Lower leg skin (tissue), 4 donors: ENCODE measurements at regions of chr1 and their contacts with region 1.

Region 1: DNA sequence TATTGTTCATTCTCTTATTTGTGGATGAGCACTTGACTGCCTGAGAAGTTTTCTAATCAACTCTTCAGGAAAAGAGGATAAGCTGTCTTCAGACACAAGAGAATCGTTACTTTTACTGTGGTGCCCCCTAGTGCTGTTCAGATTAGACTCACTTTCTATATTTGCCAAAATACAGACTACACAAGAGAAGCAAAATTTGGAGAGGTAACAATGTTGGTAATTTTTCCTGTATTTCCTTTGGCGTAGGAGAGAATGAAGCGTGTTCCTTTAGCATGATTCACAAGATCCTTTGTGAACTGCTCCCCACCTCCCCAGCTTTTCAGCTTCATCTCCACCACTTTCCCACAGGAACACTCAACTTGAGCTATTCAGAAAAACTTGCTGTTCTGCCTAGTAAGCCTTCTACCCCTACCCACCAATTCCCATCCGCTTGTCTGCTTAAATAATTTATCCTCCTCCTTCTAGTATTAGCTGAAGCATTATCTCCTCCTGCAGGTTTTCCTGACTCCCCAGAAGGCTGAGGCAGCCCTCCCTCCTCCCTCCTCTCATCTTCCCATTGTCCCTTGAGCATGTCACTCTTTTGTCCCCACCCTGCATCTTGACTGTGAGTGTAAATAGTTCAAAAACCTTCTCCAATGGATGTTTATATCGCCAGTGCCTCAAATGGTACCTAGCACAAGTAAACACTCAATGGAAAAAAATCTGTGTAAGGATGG is 4.5 kb downstream of the TNFSF4 start:
- DNase-seq: peak in 1 of 2 donors; percentile 39
- H3K4me3 ChIP-seq: no peak overlapping the region
- CTCF ChIP-seq: peak in 1 of 3 donors; percentile 24
- POLR2A ChIP-seq: no peak

Region 2: DNA sequence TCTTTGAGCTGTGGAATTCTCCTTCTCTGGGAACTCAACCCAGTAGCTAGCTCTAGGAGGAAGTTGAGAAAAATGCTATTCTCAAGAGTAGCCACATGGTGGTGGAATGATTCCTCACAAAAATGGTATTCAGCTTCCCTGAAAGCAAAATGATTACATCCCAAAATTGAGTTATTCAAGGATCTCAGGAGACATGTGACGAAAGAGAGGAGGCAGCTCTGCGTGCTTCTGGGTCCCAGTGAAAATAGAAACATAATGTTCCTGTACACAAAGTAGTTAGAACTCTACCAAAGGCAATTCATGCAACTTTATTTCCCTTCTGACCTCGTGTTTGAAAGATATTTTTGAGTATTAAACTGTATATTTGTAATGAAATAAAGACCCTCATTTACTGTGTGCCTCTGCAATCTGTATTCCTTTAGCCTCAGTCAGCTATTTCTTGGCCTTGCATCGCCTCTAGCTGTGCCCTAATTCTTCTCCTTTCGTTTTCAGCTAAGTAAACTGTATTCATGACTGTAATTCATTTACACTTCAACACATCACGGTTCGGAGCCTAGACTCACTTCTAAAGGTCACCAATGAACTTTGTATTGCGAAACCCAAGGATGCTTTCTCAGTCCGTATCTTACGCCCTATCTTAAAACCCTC is 376.4 kb before region 1 on chr1:
- intact Hi-C with region 1: loop called (anchors 5 kb)
- DNase-seq: peak in 1 of 2 donors; percentile 48
- H3K4me3 ChIP-seq: no peak overlapping the region
- CTCF ChIP-seq: no peak
- POLR2A ChIP-seq: no peak